Ascending aorta (tissue), 2 donors: ENCODE measurements at regions of chr1 and their contacts with region 1.

Region 1: DNA sequence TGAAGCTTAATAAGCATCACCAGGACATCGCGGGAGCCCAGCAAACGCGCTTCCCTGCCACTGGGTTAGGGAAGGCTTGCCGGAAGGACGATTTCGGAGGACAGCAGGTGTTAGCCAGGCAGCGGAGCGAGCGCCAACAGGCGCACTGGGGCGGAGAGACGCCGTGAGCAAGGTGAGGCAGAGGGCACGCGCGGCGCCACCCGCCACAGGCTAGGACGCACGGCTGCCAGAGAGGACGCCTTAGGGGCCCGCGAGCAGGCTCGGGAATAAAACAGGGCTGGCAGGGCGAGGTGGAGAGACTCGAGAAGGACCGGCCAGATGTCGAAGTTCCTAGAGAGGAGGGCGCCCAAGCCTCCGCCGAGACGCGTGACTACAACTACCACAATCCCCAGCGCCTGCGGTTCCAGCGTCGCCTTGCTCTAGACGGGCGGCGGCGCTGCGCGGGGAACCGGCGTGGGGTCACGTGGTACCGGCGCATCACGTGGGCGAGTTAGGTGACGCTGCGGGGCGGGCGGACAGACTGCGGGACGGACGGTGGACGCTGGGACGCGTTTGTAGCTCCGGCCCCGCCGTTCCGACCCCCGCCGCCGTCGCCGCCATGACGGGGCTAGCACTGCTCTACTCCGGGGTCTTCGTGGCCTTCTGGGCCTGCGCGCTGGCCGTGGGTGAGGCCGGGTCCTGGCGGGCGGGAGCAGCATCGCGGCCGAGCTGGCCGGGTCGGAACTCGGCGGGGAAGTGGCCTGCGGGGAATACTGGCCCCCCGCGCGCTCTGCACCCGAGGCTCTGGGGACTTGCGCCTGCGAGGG is at the start of gene ATP6V0B:
- DNase-seq: peak; percentile 87 to 97
- H3K4me3 ChIP-seq: peak within 1 kb of the TSS; percentile 71 to 78
- H3K27ac ChIP-seq: peak within 1 kb of the TSS; percentile 84 to 89
- H3K4me1 ChIP-seq: peaks cover 17 to 35% of the 10 kb centered on the region in 2 donors
- H3K27me3 ChIP-seq: no peaks in the 10 kb centered on the region
- CTCF ChIP-seq: peak in 2 of 3 experiments; percentile 11 to 46
- total RNA-seq, gene ATP6V0B: 115 TPM

Region 2: GRCh38 chr1:43706598-43707495 is 267.8 kb before region 1 on chr1:
- intact Hi-C with region 1: loop called (anchors 5 kb)
- DNase-seq: peak; percentile 69 to 94
- H3K4me3 ChIP-seq: peak overlapping the region; percentile 96 to 97
- H3K27ac ChIP-seq: peak overlapping the region in 1 of 2 donors; percentile 70
- H3K4me1 ChIP-seq: peaks cover 0 to 9% of the 10 kb centered on the region in 2 donors
- H3K27me3 ChIP-seq: no peaks in the 10 kb centered on the region
- CTCF ChIP-seq: no peak

Region 3: GRCh38 chr1:43946236-43947060 is 28.2 kb before region 1 on chr1 and contains the start of gene IPO13:
- intact Hi-C with region 1: loop called (anchors 1 kb)
- DNase-seq: peak; percentile 84 to 97
- H3K4me3 ChIP-seq: peak within 1 kb of the TSS; percentile 81 to 85
- H3K27ac ChIP-seq: peak within 1 kb of the TSS; percentile 89 to 98
- H3K4me1 ChIP-seq: peaks cover 13 to 26% of the 10 kb centered on the region in 2 donors
- H3K27me3 ChIP-seq: no peaks in the 10 kb centered on the region
- CTCF ChIP-seq: peak; percentile 73 to 84 (median 80)
- total RNA-seq, gene IPO13: 6.2 TPM

Region 4: GRCh38 chr1:43991476-43992231 is 17.0 kb after region 1 on chr1 and contains the start of gene CCDC24:
- intact Hi-C with region 1: loop called (anchors 1 kb)
- DNase-seq: peak; percentile 69 to 95
- H3K4me3 ChIP-seq: peak within 1 kb of the TSS; percentile 71 to 72
- H3K27ac ChIP-seq: peak within 1 kb of the TSS; percentile 72 to 80
- H3K4me1 ChIP-seq: peaks cover 10 to 20% of the 10 kb centered on the region in 2 donors
- H3K27me3 ChIP-seq: no peaks in the 10 kb centered on the region
- CTCF ChIP-seq: no peak
- total RNA-seq, gene CCDC24: 4.8 TPM